Endothelial cell of umbilical vein (primary cell): ENCODE measurements at regions of chr14 and their contacts with region 1.

Region 1: GRCh38 chr14:104665657-104666522 is 23.5 kb upstream of the INF2 start:
- DNase-seq: peak; percentile 53
- H3K4me3 ChIP-seq: no peak overlapping the region
- H3K27ac ChIP-seq: no peak overlapping the region
- H3K4me1 ChIP-seq: peaks cover 4% of the 10 kb centered on the region
- H3K27me3 ChIP-seq: no peaks in the 10 kb centered on the region
- CTCF ChIP-seq: peak; percentile 37 to 59
- POLR2A ChIP-seq: no peak

Region 2: GRCh38 chr14:104624939-104625338 is 41.0 kb before region 1 on chr14:
- CTCF ChIA-PET with region 1: no interaction called
- POLR2A ChIA-PET with region 1: no interaction called
- dilution Hi-C with region 1: no loop called
- intact Hi-C with region 1: no loop called
- DNase-seq: no peak
- H3K4me3 ChIP-seq: no peak overlapping the region
- H3K27ac ChIP-seq: no peak overlapping the region
- H3K4me1 ChIP-seq: no peaks in the 10 kb centered on the region
- H3K27me3 ChIP-seq: peaks cover 3 to 5% of the 10 kb centered on the region in 2 experiments
- CTCF ChIP-seq: no peak
- POLR2A ChIP-seq: no peak

Region 3: DNA sequence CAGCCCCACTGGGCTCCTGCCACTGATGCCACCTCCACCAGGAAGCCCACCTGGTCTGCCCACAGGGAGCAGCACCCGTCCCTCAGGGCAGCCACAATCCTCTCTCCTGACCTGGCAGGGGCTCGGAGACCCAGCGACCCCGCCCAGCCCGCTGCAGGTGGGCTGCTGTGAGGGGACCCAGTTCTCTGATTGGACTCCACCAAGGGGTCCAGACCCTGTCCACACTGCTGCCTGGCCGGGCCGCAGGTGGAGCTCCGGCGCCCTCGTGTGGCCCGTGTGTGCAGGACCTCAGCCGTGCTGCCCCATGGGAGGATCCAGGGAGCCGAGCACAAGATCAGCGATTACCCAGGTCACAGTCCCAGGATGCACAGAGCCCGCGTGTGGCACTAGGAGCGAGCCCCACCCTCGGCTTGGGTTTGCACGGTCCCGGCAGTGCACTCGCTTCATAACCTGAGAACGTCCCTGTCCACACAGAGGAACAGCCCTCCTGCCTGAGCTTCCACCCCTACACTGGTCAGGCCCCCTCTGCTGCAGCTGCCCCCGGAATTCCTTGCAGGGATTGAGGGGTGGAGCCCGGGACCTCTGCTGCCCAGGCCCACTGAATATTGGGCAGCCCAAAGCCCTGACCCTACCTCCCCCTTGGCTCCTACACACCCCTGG is 25.9 kb before region 1 on chr14:
- CTCF ChIA-PET with region 1: no interaction called
- POLR2A ChIA-PET with region 1: no interaction called
- dilution Hi-C with region 1: no loop called
- intact Hi-C with region 1: no loop called
- DNase-seq: peak; percentile 55
- H3K4me3 ChIP-seq: no peak overlapping the region
- H3K27ac ChIP-seq: no peak overlapping the region
- H3K4me1 ChIP-seq: no peaks in the 10 kb centered on the region
- H3K27me3 ChIP-seq: peaks cover 0 to under 1% of the 10 kb centered on the region in 2 experiments
- CTCF ChIP-seq: peak; percentile 94 to 99
- POLR2A ChIP-seq: no peak

Region 4: DNA sequence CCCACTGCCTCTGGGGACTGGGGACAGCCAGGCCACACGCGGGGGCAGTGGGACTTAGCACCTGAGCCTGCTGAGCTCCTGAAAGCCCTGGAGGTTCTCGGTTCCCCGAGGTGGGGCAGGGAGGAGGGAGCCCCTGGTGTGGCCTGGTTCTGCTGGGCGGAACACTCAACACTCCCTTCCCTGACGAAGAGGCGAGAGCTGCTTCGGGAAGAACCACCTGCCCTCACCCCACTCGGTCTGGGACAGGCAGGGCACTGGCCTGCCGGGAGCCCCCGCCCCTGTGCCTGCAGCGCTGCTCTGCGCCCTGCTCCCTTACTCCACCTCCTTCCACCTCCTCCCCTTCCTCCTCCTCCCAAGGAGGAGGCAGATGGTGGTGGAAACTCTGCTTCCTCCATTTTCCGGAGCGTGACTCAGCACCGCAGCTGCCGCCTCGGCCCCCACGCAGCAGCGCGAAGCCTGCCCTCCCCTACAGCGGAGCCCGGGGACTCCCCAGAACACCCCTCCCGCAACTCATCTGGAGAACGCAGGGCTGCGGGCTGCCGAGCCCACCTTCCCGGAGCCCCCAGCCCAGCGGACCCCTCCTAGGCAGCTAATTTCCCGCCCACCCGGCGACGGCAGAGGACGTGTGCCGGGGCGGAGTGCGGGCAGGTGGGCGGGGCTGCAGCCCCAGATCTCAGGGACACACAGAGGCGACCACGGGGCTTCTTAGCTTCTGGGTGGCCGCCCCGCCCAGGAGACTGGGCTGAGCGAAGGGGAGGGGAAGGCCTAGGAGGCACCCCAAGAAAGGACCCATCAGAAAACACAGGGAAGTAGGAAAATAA is 11.8 kb after region 1 on chr14:
- CTCF ChIA-PET with region 1: interaction called, 20 read pairs
- POLR2A ChIA-PET with region 1: interaction called, 4 read pairs
- dilution Hi-C with region 1: no loop called
- intact Hi-C with region 1: loop called (anchors 1 kb)
- DNase-seq: peak; percentile 92
- H3K4me3 ChIP-seq: peak overlapping the region in 2 of 3 experiments; percentile 19 to 38
- H3K27ac ChIP-seq: peak overlapping the region; percentile 95
- H3K4me1 ChIP-seq: peaks cover 40% of the 10 kb centered on the region
- H3K27me3 ChIP-seq: no peaks in the 10 kb centered on the region
- CTCF ChIP-seq: no peak
- POLR2A ChIP-seq: peak; percentile 71

Region 5: GRCh38 chr14:104689109-104689880 is 23.4 kb after region 1 on chr14 and contains the start of gene INF2:
- CTCF ChIA-PET with region 1: interaction called, 8 read pairs
- POLR2A ChIA-PET with region 1: interaction called, 3 read pairs
- dilution Hi-C with region 1: no loop called
- intact Hi-C with region 1: loop called (anchors 2 kb)
- DNase-seq: peak; percentile 35
- H3K4me3 ChIP-seq: peak within 1 kb of the TSS; percentile 69 to 92 (median 87)
- H3K27ac ChIP-seq: peak within 1 kb of the TSS; percentile 50
- H3K4me1 ChIP-seq: peaks cover 28% of the 10 kb centered on the region
- H3K27me3 ChIP-seq: no peaks in the 10 kb centered on the region
- CTCF ChIP-seq: no peak
- POLR2A ChIP-seq: peak; percentile 76
- total RNA-seq, gene INF2: 117 and 124 TPM in 2 replicates

Region 6: DNA sequence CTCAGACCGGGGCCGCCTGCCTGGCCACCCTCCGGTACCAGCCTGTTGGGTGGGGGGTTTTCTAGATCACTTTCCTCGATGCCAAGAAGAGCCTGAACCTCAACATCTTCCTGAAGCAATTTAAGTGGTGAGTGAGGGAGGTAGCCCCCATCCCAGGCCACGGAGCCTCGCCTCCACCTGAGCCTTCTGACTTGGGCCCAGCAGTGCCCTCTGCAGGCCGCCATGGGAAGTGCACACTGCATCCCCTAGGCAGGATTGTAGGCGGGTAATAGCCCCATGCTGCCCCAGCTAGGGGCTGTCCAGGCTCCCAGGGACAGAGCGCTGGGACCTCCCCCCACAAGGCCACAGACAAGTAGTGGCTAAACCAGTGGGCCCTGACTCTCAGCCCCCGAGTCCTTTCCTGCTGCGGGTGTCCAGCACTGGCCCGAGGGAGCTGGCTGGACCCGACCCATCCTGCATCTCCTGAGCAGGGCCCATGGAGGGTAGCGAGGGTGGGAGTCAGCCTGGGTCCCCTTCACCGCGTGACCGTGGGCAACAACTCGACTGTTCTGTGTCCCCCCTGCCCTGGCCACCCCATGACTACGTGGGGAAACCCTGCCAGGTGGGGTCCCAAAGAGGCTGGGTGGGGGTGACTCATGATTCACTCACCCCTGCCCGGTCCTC is 42.8 kb after region 1 on chr14:
- CTCF ChIA-PET with region 1: interaction called, 30 read pairs
- POLR2A ChIA-PET with region 1: no interaction called
- dilution Hi-C with region 1: no loop called
- intact Hi-C with region 1: loop called (anchors 1 kb)
- DNase-seq: peak; percentile 61
- H3K4me3 ChIP-seq: no peak overlapping the region
- H3K27ac ChIP-seq: no peak overlapping the region
- H3K4me1 ChIP-seq: no peaks in the 10 kb centered on the region
- H3K27me3 ChIP-seq: no peaks in the 10 kb centered on the region
- CTCF ChIP-seq: peak; percentile 97 to 98
- POLR2A ChIP-seq: no peak